Posterior cingulate gyrus (tissue), 11 donors: ENCODE measurements at regions of chr3 and their contacts with region 1.

Region 1: GRCh38 chr3:145767909-145768308 is 393.1 kb downstream of the PLOD2 start:
- DNase-seq: no peak

Region 2: GRCh38 chr3:143895805-143896204 is 1872.1 kb before region 1 on chr3:
- intact Hi-C with region 1: loop called (anchors 5 kb)
- DNase-seq: no peak

Region 3: GRCh38 chr3:145704020-145704419 is 63.9 kb before region 1 on chr3:
- intact Hi-C with region 1: no loop called
- DNase-seq: no peak

Region 4: DNA sequence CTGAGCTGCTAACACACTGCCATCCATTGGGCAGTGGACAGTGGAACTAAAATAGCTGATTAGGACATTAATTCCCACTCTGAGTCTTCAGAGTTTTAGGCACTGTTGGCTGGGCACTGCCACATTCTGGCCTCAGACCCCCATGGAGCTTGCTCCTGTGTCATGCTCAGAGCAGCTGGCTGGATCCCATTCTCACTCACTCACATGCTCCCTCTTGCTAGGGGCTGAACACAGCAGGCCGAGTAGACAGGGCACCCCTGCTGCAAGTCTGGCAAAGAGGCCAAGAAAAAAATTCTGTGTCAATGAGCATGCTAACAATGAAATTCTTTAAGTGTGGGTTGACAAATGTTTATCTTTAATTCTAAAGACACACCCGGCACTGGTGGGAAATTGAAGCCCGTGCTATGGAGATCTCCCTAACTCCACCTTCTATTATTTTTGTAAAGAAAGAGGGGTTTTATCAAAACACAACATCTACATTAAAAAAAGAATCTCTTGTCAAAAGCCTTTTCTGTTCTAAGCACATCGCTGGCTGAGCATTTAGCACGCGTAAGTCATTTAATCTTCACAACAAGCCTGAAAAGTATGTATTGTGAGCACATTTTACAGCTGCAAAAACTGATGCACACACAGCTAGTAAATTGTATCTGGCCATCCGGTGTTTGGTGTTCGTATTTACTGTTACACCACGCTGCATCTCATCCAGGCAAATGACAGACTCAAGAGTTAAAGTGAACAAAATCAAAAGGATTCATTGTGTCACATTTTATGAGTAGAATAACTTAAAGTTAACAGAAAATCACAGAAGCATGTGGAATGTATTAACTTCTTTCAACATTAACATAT is 31.0 kb after region 1 on chr3:
- intact Hi-C with region 1: no loop called
- DNase-seq: peak in 3 of 10 donors; percentile 3 to 47 (median 13)